ENCODE measurements at regions of chr7 and their contacts with region 1.

Region 1: GRCh38 chr7:153381275-153382040 is 621.9 kb downstream of the ACTR3B start:
- DNase-seq: peak in 1 of 2 experiments; percentile 17
- H3K4me3 ChIP-seq: no peak overlapping the region
- H3K4me3 Mint-ChIP-seq: no peak overlapping the region
- H3K27ac Mint-ChIP-seq: no peak overlapping the region
- H3K4me1 ChIP-seq: no peaks in the 10 kb centered on the region
- H3K4me1 Mint-ChIP-seq: no peaks in the 10 kb centered on the region
- H3K27me3 ChIP-seq: no peaks in the 10 kb centered on the region
- H3K27me3 Mint-ChIP-seq: no peaks in the 10 kb centered on the region
- CTCF ChIP-seq: peak; percentile 52 to 69

Region 2: DNA sequence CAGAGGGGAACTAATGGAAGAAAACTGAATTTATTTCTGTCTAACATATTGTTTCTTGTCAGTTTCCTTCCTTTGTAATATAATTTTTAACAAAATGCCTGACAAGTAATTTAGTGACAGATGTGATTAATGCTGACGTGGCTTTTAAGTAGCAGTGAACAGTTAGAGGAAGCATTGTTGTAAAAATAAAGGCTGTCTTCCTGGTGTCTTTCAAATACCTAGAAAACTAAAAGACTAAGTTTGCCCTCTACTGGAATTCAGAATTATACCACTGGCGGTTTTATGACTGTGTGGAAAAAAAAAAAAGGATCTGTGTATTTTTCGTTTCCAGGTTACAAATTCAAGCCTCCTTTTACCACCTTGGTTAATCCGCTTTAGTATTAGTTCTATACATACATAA is 453.6 kb after region 1 on chr7:
- CTCF ChIA-PET with region 1: no interaction called
- POLR2A ChIA-PET with region 1: no interaction called
- intact Hi-C with region 1: loop called (anchors 10 kb)
- DNase-seq: no peak
- H3K4me3 ChIP-seq: no peak overlapping the region
- H3K4me3 Mint-ChIP-seq: no peak overlapping the region
- H3K27ac Mint-ChIP-seq: no peak overlapping the region
- H3K4me1 ChIP-seq: no peaks in the 10 kb centered on the region
- H3K4me1 Mint-ChIP-seq: no peaks in the 10 kb centered on the region
- H3K27me3 ChIP-seq: no peaks in the 10 kb centered on the region
- H3K27me3 Mint-ChIP-seq: no peaks in the 10 kb centered on the region
- CTCF ChIP-seq: no peak

Measured in Caco-2 (cell line).